Gastrocnemius medialis (tissue), 4 donors: ENCODE measurements at regions of chr6 and their contacts with region 1.

Region 1: GRCh38 chr6:27518881-27519795 is 46.2 kb upstream of the ZNF184 start:
- DNase-seq: peak; percentile 18 to 29
- ATAC-seq: peak; percentile 88 to 89
- H3K4me3 ChIP-seq: peak overlapping the region; percentile 65 to 88 (median 76)
- H3K27ac ChIP-seq: peak overlapping the region; percentile 77 to 82 (median 79)
- H3K4me1 ChIP-seq: peaks cover 6 to 7% of the 10 kb centered on the region in 2 donors
- H3K27me3 ChIP-seq: peaks cover 4 to 11% (median 8%) of the 10 kb centered on the region in 3 donors
- CTCF ChIP-seq: peak in 4 of 5 experiments; percentile 32 to 65 (median 59)
- POLR2A ChIP-seq: no peak

Region 2: DNA sequence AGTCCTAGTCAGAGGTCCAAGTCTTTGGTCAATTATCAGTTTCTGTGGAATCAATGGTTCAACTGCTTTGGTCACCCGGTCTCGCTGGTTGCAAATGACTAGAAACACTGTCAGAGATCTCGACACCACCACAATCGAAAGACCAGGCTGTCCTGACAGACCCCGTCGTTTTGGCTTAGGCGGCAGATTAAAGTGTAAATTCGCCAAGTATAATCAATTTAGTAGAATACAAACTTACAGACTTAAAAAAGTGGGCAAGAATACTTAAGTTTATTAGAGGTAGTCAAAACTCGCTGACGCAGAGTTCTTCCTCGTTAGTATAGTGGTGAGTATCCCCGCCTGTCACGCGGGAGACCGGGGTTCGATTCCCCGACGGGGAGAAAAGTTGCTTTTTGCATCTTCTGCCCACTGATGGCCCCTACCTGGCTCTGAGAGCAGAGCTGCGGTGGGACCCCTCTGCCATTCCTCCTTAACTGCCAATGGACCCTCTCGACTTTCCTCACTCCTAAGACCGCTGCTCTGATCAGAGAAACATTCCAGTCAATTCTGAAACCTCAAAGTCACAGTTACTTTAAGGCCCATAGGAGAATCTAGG is 15.6 kb before region 1 on chr6:
- in situ Hi-C with region 1: no loop called
- intact Hi-C with region 1: loop called (anchors 2 kb)
- DNase-seq: no peak
- ATAC-seq: peak; percentile 54 to 55
- H3K4me3 ChIP-seq: peak overlapping the region; percentile 35 to 49 (median 38)
- H3K27ac ChIP-seq: peak overlapping the region in 2 of 4 donors; percentile 7 to 24
- H3K4me1 ChIP-seq: peaks cover 0 to 13% of the 10 kb centered on the region in 2 donors
- H3K27me3 ChIP-seq: peaks cover 20 to 43% (median 27%) of the 10 kb centered on the region in 3 donors
- CTCF ChIP-seq: no peak
- POLR2A ChIP-seq: no peak

Region 3: DNA sequence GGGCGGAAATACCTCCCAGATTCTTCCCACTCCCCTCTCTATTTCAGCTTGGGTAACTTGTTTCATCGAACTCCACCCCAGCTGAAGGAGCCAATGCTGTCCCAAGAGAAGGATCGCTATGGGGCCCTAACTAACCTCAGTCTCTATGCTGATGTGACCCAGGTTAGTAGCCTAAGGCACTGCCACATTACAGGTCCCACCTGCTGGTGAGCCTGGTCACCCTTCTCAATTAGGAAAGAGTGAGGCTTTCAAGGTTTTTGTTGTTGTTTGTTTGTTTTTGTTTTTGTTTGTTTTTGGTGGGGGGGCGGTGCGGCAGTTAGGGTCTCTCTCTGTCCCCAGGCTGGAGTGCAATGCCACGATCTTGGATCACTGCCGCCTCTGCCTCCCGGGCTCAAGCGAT is 224.7 kb after region 1 on chr6:
- in situ Hi-C with region 1: loop called in 1 of 4 experiments (anchors 10 kb)
- intact Hi-C with region 1: no loop called
- DNase-seq: no peak
- ATAC-seq: no peak
- H3K4me3 ChIP-seq: no peak overlapping the region
- H3K27ac ChIP-seq: no peak overlapping the region
- H3K4me1 ChIP-seq: no peaks in the 10 kb centered on the region
- H3K27me3 ChIP-seq: peaks cover 0 to 36% (median 24%) of the 10 kb centered on the region in 3 donors
- CTCF ChIP-seq: no peak
- POLR2A ChIP-seq: no peak